T-cell (primary cell): ENCODE measurements at regions of chrX and their contacts with region 1.

Region 1: DNA sequence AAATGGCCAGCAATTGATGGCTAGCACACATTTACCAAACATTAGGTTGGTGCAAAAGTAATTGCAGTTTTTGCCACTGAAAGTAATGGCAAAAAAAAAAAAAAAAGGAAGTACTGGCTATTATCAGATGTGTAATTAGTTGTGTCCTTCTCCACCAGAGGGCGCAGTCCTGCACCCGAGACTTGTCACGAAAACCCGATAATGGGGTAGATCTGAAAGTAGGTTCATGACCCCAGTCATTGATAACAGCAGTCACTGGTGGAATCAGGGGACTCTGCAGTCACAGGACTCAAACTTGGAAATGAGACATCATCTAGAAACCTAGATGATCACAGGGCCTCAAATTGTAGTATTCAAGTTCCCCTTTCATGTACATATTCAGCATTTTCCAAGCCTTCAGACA is 13.1 kb upstream of the ACOT9 start:
- DNase-seq: peak; percentile 14 to 79 (median 51)
- ATAC-seq: peak in 3 of 4 experiments; percentile 40 to 62 (median 56)
- H3K4me3 ChIP-seq: no peak overlapping the region
- H3K4me3 Mint-ChIP-seq: no peak overlapping the region
- H3K27ac ChIP-seq: no peak overlapping the region
- H3K27ac Mint-ChIP-seq: peak overlapping the region in 1 of 2 donors; percentile 39
- H3K4me1 ChIP-seq: no peaks in the 10 kb centered on the region
- H3K4me1 Mint-ChIP-seq: peaks cover 0 to 4% (median 3%) of the 10 kb centered on the region in 3 donors
- H3K27me3 ChIP-seq: no peaks in the 10 kb centered on the region
- H3K27me3 Mint-ChIP-seq: peaks cover 0 to 12% of the 10 kb centered on the region in 2 donors

Region 2: DNA sequence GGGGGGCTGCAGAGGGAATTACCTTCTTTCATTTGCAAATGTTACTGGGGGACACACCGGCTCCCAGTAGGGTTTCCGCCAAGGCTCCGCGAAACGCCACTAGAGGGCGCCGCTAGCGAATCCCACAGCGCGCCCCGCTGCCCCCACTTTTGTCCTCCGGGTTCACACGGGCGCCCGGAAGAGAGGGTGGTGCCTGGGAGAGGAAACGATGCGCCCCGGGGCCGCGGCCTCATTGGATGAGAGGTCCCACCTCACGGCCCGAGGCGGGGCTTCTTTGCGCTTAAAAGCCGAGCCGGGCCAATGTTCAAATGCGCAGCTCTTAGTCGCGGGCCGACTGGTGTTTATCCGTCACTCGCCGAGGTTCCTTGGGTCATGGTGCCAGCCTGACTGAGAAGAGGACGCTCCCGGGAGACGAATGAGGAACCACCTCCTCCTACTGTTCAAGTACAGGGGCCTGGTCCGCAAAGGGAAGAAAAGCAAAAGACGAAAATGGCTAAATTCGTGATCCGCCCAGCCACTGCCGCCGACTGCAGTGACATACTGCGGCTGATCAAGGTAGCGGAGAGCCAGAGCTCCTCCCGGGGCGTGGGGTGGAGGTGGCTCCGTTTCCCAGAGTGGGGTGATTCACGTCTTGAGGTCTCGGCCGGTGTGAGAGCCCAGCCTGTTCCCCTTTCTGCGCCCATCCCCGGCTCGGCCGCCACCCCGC is 26.9 kb after region 1 on chrX and contains the start of gene SAT1:
- CTCF ChIA-PET with region 1: interaction called in 1 of 2 experiments, 13 read pairs
- POLR2A ChIA-PET with region 1: no interaction called
- DNase-seq: peak; percentile 82 to 95 (median 92)
- ATAC-seq: peak; percentile 90 to 95 (median 94)
- H3K4me3 ChIP-seq: peak within 1 kb of the TSS; percentile 62 to 90
- H3K4me3 Mint-ChIP-seq: peak within 1 kb of the TSS; percentile 94 to 95 (median 94)
- H3K27ac ChIP-seq: peak within 1 kb of the TSS; percentile 93
- H3K27ac Mint-ChIP-seq: peak within 1 kb of the TSS; percentile 95
- H3K4me1 ChIP-seq: peaks cover 14 to 18% of the 10 kb centered on the region in 2 experiments
- H3K4me1 Mint-ChIP-seq: peaks cover 34 to 40% (median 40%) of the 10 kb centered on the region in 3 donors
- H3K27me3 ChIP-seq: no peaks in the 10 kb centered on the region
- H3K27me3 Mint-ChIP-seq: no peaks in the 10 kb centered on the region
- total RNA-seq, gene SAT1: 89.6 to 258 (median 94.4) TPM

Region 3: DNA sequence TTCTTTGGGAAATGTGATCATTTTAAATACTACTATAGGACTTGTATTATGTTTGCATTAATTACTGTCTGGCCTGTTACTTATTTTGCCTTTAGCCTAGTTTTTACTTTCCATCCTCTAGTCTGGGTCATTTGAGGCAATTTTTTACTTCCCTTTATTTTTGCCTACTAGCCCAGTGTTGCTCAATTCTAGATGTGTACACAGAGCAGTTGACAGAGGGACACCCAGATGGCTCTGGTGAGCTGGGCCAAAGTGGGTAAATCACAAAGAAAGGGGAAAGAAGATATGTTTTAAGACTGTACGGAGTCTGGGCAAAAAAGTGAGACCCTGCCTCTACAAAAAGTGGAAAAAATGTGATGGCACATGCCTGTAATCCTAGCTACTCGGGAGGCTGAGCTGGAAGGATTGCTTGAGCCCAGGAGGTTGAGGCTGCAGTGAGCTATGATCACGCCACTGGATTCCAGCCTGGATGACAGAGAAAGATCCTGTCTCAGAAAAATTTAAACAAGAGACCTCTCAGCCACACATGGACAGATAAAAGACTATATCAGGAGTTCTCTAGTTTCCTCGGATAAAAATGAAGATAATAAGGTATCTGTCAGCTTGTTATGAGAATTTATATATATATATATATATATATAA is 115.9 kb after region 1 on chrX:
- CTCF ChIA-PET with region 1: no interaction called
- POLR2A ChIA-PET with region 1: no interaction called
- DNase-seq: no peak
- ATAC-seq: no peak
- H3K4me3 ChIP-seq: no peak overlapping the region
- H3K4me3 Mint-ChIP-seq: no peak overlapping the region
- H3K27ac ChIP-seq: no peak overlapping the region
- H3K27ac Mint-ChIP-seq: no peak overlapping the region
- H3K4me1 ChIP-seq: no peaks in the 10 kb centered on the region
- H3K4me1 Mint-ChIP-seq: no peaks in the 10 kb centered on the region
- H3K27me3 ChIP-seq: no peaks in the 10 kb centered on the region
- H3K27me3 Mint-ChIP-seq: no peaks in the 10 kb centered on the region

Region 4: DNA sequence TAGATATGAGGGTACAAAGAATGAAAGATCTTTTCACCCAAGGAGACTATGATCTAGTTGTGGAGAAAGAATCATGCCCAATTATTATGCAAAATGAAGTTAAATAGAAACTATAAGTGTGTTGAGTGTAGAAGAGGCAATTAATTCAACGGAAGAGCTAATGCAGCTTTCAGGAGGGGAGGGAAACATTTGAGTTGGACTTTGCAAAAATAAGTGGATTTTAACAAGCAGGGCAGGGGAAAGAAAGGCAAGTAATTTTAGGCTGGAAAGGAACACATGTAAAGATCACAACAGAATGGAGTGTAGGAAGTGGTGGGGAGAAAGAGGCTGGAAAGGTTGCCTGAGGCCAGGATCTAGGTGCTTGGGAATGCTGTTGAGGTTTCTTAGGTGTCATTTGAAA is 226.7 kb after region 1 on chrX:
- CTCF ChIA-PET with region 1: interaction called in 1 of 2 experiments, 3 read pairs
- POLR2A ChIA-PET with region 1: interaction called in 1 of 2 experiments, 15 read pairs
- DNase-seq: no peak
- ATAC-seq: no peak
- H3K4me3 ChIP-seq: no peak overlapping the region
- H3K4me3 Mint-ChIP-seq: no peak overlapping the region
- H3K27ac ChIP-seq: no peak overlapping the region
- H3K27ac Mint-ChIP-seq: no peak overlapping the region
- H3K4me1 ChIP-seq: no peaks in the 10 kb centered on the region
- H3K4me1 Mint-ChIP-seq: peaks cover 0 to 6% (median 2%) of the 10 kb centered on the region in 3 donors
- H3K27me3 ChIP-seq: no peaks in the 10 kb centered on the region
- H3K27me3 Mint-ChIP-seq: peaks cover 0 to 8% of the 10 kb centered on the region in 2 donors